Activated CD4-positive, alpha-beta memory T cell treated with anti-CD3 and anti-CD28 coated beads for 36 hours (primary cell): ENCODE measurements at regions of chr6 and their contacts with region 1.

Region 1: DNA sequence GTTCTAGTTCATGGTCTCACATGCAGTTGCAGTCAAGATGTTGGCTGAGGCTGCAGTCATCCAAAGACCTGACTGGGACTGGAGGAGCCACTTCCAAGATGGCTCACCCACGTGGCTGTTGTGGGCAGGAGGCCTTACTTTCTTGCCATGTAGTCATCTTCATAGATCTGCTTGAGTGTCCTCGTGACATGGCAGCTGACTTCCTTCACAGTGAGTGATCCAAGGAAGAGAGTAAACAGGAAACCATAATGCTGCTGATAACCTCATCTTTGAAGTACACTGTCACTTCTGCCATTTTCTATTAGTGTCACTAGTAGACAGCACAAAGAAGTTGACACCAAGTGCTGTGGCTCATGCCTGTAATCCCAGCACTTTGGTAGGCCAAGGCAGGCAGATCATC is 40.1 kb upstream of the AKIRIN2 start:
- DNase-seq: peak; percentile 90
- H3K4me3 Mint-ChIP-seq: peak overlapping the region; percentile 16
- H3K27ac Mint-ChIP-seq: peak overlapping the region; percentile 82
- H3K4me1 Mint-ChIP-seq: peaks cover 44% of the 10 kb centered on the region
- H3K27me3 Mint-ChIP-seq: no peaks in the 10 kb centered on the region

Region 2: GRCh38 chr6:87628881-87629280 is 113.2 kb before region 1 on chr6:
- CTCF ChIA-PET with region 1: no interaction called
- POLR2A ChIA-PET with region 1: no interaction called
- intact Hi-C with region 1: no loop called
- DNase-seq: no peak
- H3K4me3 Mint-ChIP-seq: no peak overlapping the region
- H3K27ac Mint-ChIP-seq: no peak overlapping the region
- H3K4me1 Mint-ChIP-seq: no peaks in the 10 kb centered on the region
- H3K27me3 Mint-ChIP-seq: no peaks in the 10 kb centered on the region

Region 3: DNA sequence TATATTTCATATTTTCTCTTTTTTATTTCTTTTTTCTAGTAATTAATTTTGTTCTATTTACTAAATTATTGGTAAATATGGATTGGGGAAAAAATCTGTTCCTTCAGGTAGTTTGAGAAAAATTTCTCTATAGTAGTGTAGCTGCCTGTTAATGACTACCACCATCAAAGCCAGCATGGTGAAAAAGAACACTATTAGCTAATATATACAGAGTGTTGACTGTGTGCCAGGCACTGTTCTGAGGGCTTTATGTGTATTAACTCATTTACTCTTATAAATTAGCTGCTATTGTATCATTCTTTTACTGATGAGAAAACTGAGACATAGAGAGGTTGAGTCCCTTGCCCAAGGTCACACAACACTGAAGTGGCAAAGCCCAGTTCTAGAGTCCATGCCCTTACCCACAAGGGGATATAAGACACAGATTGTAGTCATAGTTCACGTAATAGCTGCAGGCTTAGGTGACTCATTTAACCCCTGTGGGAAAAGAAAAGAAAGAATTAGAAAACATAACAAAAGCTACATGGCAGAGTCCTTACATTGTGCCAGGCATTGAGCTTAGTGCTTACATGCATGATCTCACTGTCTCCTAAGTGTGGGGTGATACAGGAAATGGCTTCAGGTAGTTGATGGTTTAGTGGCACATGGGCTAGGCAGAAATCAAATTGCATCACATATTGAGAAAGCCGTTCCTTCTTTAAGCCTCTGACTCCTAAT is 27.9 kb before region 1 on chr6:
- CTCF ChIA-PET with region 1: no interaction called
- POLR2A ChIA-PET with region 1: no interaction called
- intact Hi-C with region 1: loop called (anchors 1 kb)
- DNase-seq: no peak
- H3K4me3 Mint-ChIP-seq: no peak overlapping the region
- H3K27ac Mint-ChIP-seq: peak overlapping the region; percentile 23
- H3K4me1 Mint-ChIP-seq: peaks cover 9% of the 10 kb centered on the region
- H3K27me3 Mint-ChIP-seq: no peaks in the 10 kb centered on the region

Region 4: DNA sequence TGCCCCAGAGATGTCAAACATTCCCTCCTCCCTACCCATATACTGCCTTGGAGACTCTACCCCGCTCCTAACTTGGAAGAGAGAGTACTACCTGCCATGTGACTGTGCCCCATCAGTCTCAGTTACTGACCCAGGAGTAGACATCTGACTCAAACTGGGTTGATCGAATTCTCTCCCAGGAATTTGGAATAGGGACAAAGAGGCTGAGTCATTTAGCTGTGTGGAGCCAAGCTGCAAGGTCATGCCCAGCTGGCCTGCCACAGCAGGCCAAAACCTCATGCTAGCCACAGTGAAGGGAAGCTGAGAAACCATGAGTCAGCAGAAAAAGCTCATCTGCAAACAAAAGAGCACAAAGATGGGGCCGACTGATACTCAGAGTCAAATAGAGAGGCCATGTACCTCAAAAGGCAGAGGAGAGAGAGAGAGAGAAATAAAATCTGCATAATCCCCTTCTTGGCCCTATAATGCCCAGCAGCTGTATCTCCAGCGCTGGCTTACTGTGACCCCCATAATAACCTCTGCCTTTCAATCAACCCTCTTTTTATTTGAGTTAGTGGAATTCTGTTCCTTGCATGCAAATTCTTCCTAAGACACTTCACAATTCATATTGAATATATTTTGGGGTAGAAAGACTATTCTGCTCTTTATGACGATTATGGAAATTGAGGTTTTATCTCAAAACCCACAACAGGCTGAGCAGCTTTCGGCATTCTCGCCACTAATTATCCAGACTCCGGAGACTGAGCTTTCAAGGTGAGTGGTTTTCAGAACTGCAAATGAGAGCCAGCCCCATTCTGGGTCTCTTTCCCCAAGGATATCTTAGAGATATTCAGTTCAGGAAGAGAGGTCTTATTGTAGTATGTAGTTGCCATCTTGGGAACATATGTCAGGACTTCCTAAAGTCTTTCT is 18.7 kb before region 1 on chr6:
- CTCF ChIA-PET with region 1: no interaction called
- POLR2A ChIA-PET with region 1: interaction called, 9 read pairs
- intact Hi-C with region 1: loop called (anchors 2 kb)
- DNase-seq: peak; percentile 38
- H3K4me3 Mint-ChIP-seq: no peak overlapping the region
- H3K27ac Mint-ChIP-seq: no peak overlapping the region
- H3K4me1 Mint-ChIP-seq: peaks cover 27% of the 10 kb centered on the region
- H3K27me3 Mint-ChIP-seq: no peaks in the 10 kb centered on the region

Region 5: DNA sequence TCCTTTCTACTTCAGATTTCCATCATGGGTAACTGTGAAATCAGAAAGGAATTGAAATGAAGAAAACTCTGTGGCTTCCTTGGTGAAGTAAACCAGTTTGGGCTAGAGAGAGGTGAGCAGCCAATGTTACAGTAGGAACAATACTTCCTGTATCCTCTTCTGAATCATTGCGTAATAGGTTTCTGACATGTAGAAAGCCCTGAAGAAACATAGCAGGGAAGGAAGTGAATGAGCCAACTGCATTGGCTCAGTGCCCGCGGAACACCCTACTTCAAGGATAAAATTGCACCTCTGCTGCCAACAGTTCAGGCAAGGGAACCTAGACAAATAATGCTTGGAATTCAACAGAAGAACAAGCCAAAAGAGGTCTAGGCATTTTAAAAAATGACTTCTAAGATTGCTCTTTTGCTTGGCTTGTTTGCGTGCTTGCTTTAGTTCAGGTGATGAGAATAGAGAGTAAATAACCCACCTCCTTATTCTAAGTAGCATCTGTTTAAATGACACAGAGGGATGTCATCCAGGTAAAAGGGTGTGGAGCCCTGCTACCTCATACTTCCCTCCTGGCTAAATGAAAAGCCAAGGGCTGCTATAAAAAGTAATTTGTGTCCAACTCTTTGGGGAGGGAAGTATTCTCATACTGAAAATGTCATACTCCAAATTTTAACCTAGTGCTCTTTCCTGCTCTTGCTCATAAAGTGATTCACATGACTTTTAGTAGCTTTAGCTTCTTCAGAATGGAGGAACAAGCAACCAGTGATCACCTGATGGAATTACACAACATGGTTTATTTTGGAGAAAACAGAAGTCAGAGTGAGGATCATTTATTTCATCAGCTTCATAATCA is 10.1 kb before region 1 on chr6:
- CTCF ChIA-PET with region 1: no interaction called
- POLR2A ChIA-PET with region 1: interaction called, 4 read pairs
- intact Hi-C with region 1: loop called (anchors 1 kb)
- DNase-seq: peak; percentile 65
- H3K4me3 Mint-ChIP-seq: peak overlapping the region; percentile 13
- H3K27ac Mint-ChIP-seq: peak overlapping the region; percentile 24
- H3K4me1 Mint-ChIP-seq: peaks cover 34% of the 10 kb centered on the region
- H3K27me3 Mint-ChIP-seq: no peaks in the 10 kb centered on the region

Region 6: GRCh38 chr6:87756858-87757257 is 14.8 kb after region 1 on chr6:
- CTCF ChIA-PET with region 1: interaction called, 3 read pairs
- POLR2A ChIA-PET with region 1: interaction called, 7 read pairs
- intact Hi-C with region 1: loop called (anchors 1 kb)
- DNase-seq: peak; percentile 63
- H3K4me3 Mint-ChIP-seq: no peak overlapping the region
- H3K27ac Mint-ChIP-seq: peak overlapping the region; percentile 6
- H3K4me1 Mint-ChIP-seq: peaks cover 14% of the 10 kb centered on the region
- H3K27me3 Mint-ChIP-seq: no peaks in the 10 kb centered on the region

Region 7: GRCh38 chr6:87808005-87808757 is 66.1 kb after region 1 on chr6:
- CTCF ChIA-PET with region 1: no interaction called
- POLR2A ChIA-PET with region 1: interaction called, 4 read pairs
- intact Hi-C with region 1: loop called (anchors 1 kb)
- DNase-seq: peak; percentile 17
- H3K4me3 Mint-ChIP-seq: no peak overlapping the region
- H3K27ac Mint-ChIP-seq: peak overlapping the region; percentile 89
- H3K4me1 Mint-ChIP-seq: peaks cover 34% of the 10 kb centered on the region
- H3K27me3 Mint-ChIP-seq: peaks cover 17% of the 10 kb centered on the region